ENCODE measurements at regions of chr18 and their contacts with region 1.

Region 1: DNA sequence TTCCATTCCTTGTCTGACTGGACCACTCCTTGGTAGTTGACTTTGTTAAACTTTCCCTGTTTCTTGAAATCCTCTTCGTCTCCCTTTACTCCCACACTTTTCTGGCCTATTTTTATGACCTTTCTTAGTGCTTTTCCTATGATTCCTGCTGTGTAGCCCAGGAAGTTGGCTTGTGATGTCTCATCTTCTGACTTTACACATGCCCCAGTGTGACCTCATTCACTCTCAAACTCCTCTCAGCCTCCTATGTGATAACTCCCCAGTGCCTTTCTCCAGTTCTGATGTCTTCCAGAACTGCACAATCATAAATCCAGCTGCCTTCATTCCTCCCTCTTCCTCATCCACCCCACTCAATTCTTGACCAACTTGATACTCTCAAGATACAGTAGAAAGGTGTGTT is 407.6 kb downstream of the TGIF1 start:
- DNase-seq: no peak
- H3K4me3 ChIP-seq: no peak overlapping the region
- CTCF ChIP-seq: no peak

Region 2: DNA sequence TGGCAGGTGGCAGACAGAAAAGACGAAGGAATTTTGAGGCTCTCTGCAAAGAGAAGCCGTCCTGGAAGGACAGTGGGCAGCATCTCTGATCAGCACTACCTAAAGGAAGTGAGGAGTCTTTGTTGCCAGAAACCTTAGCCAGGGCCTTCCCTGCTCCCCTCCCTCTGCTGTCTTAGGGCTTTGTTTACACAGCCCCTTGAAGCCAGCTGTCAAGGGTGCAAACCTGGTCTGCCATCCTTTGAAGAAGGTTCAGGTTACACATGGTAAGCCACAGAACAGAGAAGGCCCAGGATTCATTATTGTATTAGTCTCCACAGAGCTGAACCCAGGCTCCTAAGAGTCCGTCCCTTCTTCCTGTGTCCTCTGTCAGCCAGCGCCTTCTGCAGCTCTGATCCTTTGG is 50.9 kb before region 1 on chr18:
- in situ Hi-C with region 1: loop called (anchors 5 kb)
- DNase-seq: no peak
- H3K4me3 ChIP-seq: no peak overlapping the region
- CTCF ChIP-seq: no peak

Region 3: DNA sequence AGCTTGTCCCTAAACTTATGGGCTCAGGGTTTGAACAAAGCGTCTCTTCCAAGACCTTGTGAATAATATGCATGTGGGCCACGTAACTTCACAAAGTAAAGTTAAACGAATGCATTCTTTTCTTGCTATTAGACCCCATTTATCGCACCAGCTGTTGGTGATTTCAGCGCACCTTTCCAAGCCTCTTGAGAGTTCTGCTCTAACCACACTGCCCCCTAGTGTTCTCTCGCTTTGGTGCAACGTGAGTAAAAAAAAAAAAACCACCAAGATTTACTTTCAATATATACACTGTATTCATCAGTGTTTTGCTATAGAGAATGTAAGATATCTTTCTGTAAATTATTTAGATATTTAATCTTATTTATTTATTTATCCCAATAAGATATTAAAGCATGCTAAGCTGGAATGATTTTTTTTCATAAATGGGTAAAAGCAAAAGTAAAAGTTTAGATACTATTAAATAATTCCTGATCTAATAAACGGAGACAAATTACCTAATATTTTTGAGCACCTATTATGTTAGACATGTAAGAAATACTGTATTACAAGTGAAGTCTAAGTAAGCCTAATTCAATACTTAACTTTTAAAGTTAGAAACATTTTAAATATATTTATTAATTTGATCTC is 138.0 kb after region 1 on chr18:
- in situ Hi-C with region 1: no loop called
- DNase-seq: peak; percentile 76
- H3K4me3 ChIP-seq: no peak overlapping the region
- CTCF ChIP-seq: peak; percentile 91

Measured in astrocyte of the cerebellum (primary cell).